B cell (primary cell): ENCODE measurements at regions of chr1 and their contacts with region 1.

Region 1: DNA sequence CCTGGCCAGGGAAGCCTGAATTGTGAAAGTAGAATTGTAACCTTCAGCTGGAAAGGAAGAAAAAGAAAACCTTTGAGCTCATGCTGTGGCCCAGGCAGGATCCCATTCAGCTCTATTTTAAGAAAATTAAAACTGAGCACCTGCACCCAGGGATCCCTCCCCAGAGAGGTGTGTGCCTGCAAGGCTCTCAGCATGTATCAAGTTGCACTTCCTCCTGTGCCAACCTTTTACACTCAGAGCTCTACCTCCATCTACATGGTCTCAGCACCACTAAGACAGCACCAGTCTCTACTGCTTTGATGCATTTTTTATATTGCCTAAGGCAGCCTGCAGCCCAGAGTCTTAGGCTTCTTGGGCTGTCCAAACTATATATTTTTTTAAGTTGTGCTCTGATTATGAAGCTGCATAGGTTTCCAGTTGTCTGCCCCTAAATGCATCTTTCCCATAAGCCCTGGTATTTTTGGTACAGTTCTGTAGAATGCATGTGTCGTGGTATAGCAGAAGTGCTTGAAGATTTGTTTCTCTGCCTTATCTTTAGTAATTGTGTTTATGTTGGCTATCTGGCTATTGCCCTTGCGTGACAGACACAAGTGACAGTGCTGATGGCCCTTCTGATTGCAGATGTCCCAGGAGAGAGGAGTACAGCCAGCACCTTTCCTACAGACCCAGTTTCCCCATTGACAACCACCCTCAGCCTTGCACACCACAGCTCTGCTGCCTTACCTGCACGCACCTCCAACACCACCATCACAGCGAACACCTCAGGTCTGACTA is 63.1 kb downstream of the PTPRC start:
- DNase-seq: no peak
- ATAC-seq: peak; percentile 80
- H3K4me3 ChIP-seq: no peak overlapping the region
- H3K4me3 Mint-ChIP-seq: no peak overlapping the region
- H3K27ac ChIP-seq: peak overlapping the region in 1 of 2 donors; percentile 23
- H3K27ac Mint-ChIP-seq: peak overlapping the region; percentile 83
- H3K4me1 ChIP-seq: peaks cover 23 to 27% of the 10 kb centered on the region in 2 donors
- H3K4me1 Mint-ChIP-seq: peaks cover 40% of the 10 kb centered on the region
- H3K27me3 ChIP-seq: no peaks in the 10 kb centered on the region
- H3K27me3 Mint-ChIP-seq: no peaks in the 10 kb centered on the region
- CTCF ChIP-seq: no peak

Region 2: DNA sequence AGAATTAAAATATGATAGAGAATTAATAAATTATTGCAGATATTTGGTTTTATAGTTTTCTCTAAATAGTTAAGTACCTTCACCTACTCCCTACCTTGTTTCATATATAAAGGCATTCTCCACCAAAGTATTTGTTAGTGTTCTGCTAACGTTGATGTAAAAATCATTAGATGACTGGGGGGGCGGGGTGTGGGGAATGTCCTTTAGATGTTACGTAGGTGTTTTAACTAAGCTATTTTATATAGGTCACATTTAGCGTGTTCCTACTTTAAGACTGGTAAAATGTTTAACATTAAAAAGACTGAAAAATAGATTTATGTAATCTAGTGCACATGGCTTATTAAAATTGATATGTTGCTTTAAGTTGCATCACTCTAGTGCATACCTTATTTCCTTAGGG is 14.5 kb before region 1 on chr1:
- CTCF ChIA-PET with region 1: interaction called, 29 read pairs
- POLR2A ChIA-PET with region 1: no interaction called
- intact Hi-C with region 1: no loop called
- DNase-seq: no peak
- ATAC-seq: no peak
- H3K4me3 ChIP-seq: no peak overlapping the region
- H3K4me3 Mint-ChIP-seq: no peak overlapping the region
- H3K27ac ChIP-seq: peak overlapping the region in 1 of 2 donors; percentile 98
- H3K27ac Mint-ChIP-seq: no peak overlapping the region
- H3K4me1 ChIP-seq: peaks cover 42 to 84% of the 10 kb centered on the region in 2 donors
- H3K4me1 Mint-ChIP-seq: peaks cover 83% of the 10 kb centered on the region
- H3K27me3 ChIP-seq: no peaks in the 10 kb centered on the region
- H3K27me3 Mint-ChIP-seq: no peaks in the 10 kb centered on the region
- CTCF ChIP-seq: no peak